CD4-positive, alpha-beta T cell (primary cell): ENCODE measurements at regions of chr7 and their contacts with region 1.

Region 1: DNA sequence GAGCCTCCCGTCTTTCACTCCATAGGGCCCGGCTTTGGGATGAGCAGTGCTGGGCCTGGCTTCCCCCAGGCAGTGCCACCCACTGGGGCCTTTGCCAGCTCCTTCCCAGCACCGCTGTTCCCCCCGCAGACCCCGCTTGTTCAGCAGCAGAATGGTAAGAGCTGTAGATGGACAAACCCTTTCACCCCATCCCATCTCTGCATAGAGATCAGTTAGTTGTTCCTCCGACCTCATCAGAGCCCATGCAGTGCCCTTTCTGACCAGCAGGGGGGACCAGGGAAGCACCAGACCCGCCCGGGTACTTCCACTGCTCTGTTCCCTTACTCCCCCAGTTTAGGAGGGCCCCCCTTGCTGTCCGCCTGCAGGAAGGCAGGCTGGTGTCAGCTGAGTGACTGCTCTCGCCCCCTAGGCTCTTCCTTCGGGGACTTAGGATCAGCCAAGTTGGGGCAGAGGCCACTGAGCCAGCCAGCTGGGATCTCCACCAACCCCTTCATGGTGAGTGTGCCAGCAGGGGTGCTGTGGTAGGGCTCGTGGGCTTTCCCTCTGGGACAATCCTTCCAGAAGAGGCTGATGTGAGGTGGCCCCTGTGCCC is 9.8 kb downstream of the SAP25 start:
- DNase-seq: peak; percentile 75 to 92 (median 84)
- ATAC-seq: peak; percentile 76
- H3K4me3 ChIP-seq: no peak overlapping the region
- H3K4me3 Mint-ChIP-seq: no peak overlapping the region
- H3K27ac ChIP-seq: no peak overlapping the region
- H3K27ac Mint-ChIP-seq: no peak overlapping the region
- H3K4me1 ChIP-seq: peaks cover 35% of the 10 kb centered on the region
- H3K4me1 Mint-ChIP-seq: peaks cover 34% of the 10 kb centered on the region
- H3K27me3 ChIP-seq: no peaks in the 10 kb centered on the region
- H3K27me3 Mint-ChIP-seq: no peaks in the 10 kb centered on the region
- CTCF ChIP-seq: peak; percentile 92

Region 2: DNA sequence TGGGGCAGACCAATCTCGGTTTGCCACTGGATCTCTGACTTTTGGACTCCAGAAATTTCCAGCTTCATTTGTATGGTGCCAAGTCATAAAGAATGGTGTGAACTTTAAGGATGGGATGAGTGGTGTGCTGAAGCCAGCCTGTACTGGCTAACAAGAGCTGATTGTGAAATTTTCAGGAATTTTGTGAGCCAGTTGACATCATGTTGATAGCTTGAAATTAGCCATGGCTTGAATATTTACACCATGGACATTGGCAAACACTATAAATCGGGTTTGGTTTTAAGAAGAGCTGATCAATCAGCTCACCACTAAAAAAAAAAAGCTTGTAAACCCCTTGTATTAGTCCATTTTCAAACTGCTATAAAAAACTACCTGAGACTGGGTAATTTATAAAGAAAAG is 1305.4 kb before region 1 on chr7:
- CTCF ChIA-PET with region 1: no interaction called
- POLR2A ChIA-PET with region 1: no interaction called
- intact Hi-C with region 1: no loop called
- DNase-seq: no peak
- ATAC-seq: no peak
- H3K4me3 ChIP-seq: no peak overlapping the region
- H3K4me3 Mint-ChIP-seq: no peak overlapping the region
- H3K27ac ChIP-seq: no peak overlapping the region
- H3K27ac Mint-ChIP-seq: no peak overlapping the region
- H3K4me1 ChIP-seq: no peaks in the 10 kb centered on the region
- H3K4me1 Mint-ChIP-seq: no peaks in the 10 kb centered on the region
- H3K27me3 ChIP-seq: no peaks in the 10 kb centered on the region
- H3K27me3 Mint-ChIP-seq: no peaks in the 10 kb centered on the region
- CTCF ChIP-seq: no peak

Region 3: DNA sequence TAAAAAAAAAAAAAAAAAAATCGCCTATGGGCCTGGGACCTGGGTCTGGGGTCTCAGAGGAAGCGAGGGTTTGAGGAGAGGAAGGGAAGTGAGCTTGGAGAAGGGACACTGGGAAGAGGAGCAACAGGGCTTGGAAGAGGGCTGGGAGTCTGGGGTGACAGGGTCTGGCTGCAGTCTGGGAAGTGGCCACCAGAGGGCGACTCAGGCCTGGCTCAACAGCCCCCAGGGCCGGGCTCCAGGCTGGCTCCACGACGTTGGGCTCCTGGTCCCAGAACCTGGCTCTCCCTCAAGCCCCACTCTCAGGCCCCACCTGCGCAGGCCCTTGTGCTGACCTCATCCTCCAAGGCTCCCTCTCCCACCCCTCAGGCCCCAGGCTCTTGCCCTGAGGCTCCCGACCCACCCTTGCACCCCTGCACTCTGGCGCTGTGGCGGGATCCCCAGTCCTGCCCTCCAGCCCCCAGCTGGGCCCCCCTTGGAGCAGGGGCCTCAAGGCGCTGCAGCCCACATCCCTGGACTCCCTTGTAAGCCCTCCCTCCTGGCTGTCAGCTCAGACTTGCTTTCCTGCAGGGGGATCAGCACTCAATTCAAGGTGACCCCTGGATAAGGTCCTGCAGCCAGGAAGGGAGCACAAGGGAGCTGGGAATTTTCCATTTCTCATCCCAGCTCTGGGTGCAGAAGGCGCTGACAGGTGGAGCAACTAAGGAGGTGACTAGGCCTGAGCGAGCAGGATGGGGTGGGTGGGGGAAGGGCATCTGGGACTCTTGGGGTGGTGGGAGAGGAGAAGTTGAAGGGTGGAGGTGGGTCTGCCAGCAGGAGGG is 94.5 kb before region 1 on chr7:
- CTCF ChIA-PET with region 1: interaction called, 22 read pairs
- POLR2A ChIA-PET with region 1: interaction called, 5 read pairs
- intact Hi-C with region 1: loop called (anchors 1 kb)
- DNase-seq: peak; percentile 70 to 92 (median 82)
- ATAC-seq: peak; percentile 97
- H3K4me3 ChIP-seq: no peak overlapping the region
- H3K4me3 Mint-ChIP-seq: no peak overlapping the region
- H3K27ac ChIP-seq: no peak overlapping the region
- H3K27ac Mint-ChIP-seq: no peak overlapping the region
- H3K4me1 ChIP-seq: peaks cover 38% of the 10 kb centered on the region
- H3K4me1 Mint-ChIP-seq: peaks cover 32% of the 10 kb centered on the region
- H3K27me3 ChIP-seq: no peaks in the 10 kb centered on the region
- H3K27me3 Mint-ChIP-seq: no peaks in the 10 kb centered on the region
- CTCF ChIP-seq: peak; percentile 90

Region 4: DNA sequence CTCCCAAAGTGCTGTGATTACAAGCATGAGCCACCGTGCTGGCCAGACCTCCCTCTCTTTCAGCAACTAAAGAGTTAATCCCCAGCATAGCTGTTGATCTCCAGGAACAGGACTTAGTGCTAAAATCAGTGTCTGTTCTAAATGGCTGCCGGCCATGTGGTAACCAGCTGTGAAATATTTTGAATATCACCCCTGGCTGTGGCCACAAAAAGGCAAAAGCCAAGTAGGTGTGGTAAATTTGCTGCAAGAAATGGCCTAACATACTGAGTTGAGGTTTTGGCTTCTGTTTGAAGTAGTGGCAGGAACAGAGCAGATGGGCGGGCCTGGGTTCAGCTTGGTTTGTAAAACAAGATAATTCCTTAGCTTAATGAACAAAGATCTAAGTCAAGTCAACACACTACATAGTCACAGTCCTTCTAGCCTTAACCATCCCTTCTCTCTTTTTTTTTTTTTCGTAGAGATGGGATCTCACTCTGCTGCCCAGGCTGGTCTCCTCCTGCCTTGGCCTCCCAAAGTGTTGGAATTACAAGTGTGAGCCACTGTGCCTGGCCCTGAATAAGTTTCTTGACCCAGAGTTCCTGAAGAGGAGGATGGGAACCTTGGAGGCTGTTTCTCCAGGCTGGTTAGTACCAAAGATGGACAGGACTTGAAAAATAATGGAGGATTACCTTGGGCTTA is 47.6 kb before region 1 on chr7:
- CTCF ChIA-PET with region 1: interaction called, 11 read pairs
- POLR2A ChIA-PET with region 1: interaction called, 6 read pairs
- intact Hi-C with region 1: no loop called
- DNase-seq: peak in 13 of 14 experiments; percentile 23 to 90 (median 48)
- ATAC-seq: peak; percentile 91
- H3K4me3 ChIP-seq: peak overlapping the region; percentile 1
- H3K4me3 Mint-ChIP-seq: peak overlapping the region; percentile 69
- H3K27ac ChIP-seq: peak overlapping the region in 1 of 2 donors; percentile 18
- H3K27ac Mint-ChIP-seq: peak overlapping the region; percentile 76
- H3K4me1 ChIP-seq: peaks cover 29% of the 10 kb centered on the region
- H3K4me1 Mint-ChIP-seq: peaks cover 38% of the 10 kb centered on the region
- H3K27me3 ChIP-seq: no peaks in the 10 kb centered on the region
- H3K27me3 Mint-ChIP-seq: no peaks in the 10 kb centered on the region
- CTCF ChIP-seq: no peak

Region 5: GRCh38 chr7:100545360-100546128 is 18.4 kb before region 1 on chr7:
- CTCF ChIA-PET with region 1: interaction called, 48 read pairs
- POLR2A ChIA-PET with region 1: interaction called, 8 read pairs
- intact Hi-C with region 1: loop called in 1 of 2 experiments (anchors 2 kb)
- DNase-seq: peak in 9 of 14 experiments; percentile 21 to 74 (median 44)
- ATAC-seq: peak; percentile 73
- H3K4me3 ChIP-seq: peak overlapping the region; percentile 29
- H3K4me3 Mint-ChIP-seq: peak overlapping the region; percentile 47
- H3K27ac ChIP-seq: peak overlapping the region; percentile 63 to 84
- H3K27ac Mint-ChIP-seq: peak overlapping the region; percentile 73
- H3K4me1 ChIP-seq: peaks cover 96% of the 10 kb centered on the region
- H3K4me1 Mint-ChIP-seq: peaks cover 97% of the 10 kb centered on the region
- H3K27me3 ChIP-seq: no peaks in the 10 kb centered on the region
- H3K27me3 Mint-ChIP-seq: no peaks in the 10 kb centered on the region
- CTCF ChIP-seq: no peak

Region 6: GRCh38 chr7:100691676-100692577 is 128.0 kb after region 1 on chr7:
- CTCF ChIA-PET with region 1: interaction called, 9 read pairs
- POLR2A ChIA-PET with region 1: no interaction called
- intact Hi-C with region 1: loop called (anchors 1 kb)
- DNase-seq: peak; percentile 71 to 91 (median 79)
- ATAC-seq: peak; percentile 77
- H3K4me3 ChIP-seq: peak overlapping the region; percentile 75
- H3K4me3 Mint-ChIP-seq: peak overlapping the region; percentile 97
- H3K27ac ChIP-seq: no peak overlapping the region
- H3K27ac Mint-ChIP-seq: peak overlapping the region; percentile 85
- H3K4me1 ChIP-seq: peaks cover 62% of the 10 kb centered on the region
- H3K4me1 Mint-ChIP-seq: peaks cover 34% of the 10 kb centered on the region
- H3K27me3 ChIP-seq: no peaks in the 10 kb centered on the region
- H3K27me3 Mint-ChIP-seq: no peaks in the 10 kb centered on the region
- CTCF ChIP-seq: peak; percentile 87

Region 7: GRCh38 chr7:100852048-100852872 is 288.4 kb after region 1 on chr7 and contains the start of gene SLC12A9:
- CTCF ChIA-PET with region 1: interaction called, 3 read pairs
- POLR2A ChIA-PET with region 1: interaction called, 5 read pairs
- intact Hi-C with region 1: loop called (anchors 2 kb)
- DNase-seq: peak; percentile 68 to 92 (median 82)
- ATAC-seq: peak; percentile 91
- H3K4me3 ChIP-seq: peak within 1 kb of the TSS; percentile 72
- H3K4me3 Mint-ChIP-seq: peak within 1 kb of the TSS; percentile 95
- H3K27ac ChIP-seq: peak within 1 kb of the TSS; percentile 36 to 62
- H3K27ac Mint-ChIP-seq: peak within 1 kb of the TSS; percentile 91
- H3K4me1 ChIP-seq: peaks cover 30% of the 10 kb centered on the region
- H3K4me1 Mint-ChIP-seq: peaks cover 23% of the 10 kb centered on the region
- H3K27me3 ChIP-seq: no peaks in the 10 kb centered on the region
- H3K27me3 Mint-ChIP-seq: no peaks in the 10 kb centered on the region
- CTCF ChIP-seq: peak; percentile 96
- total RNA-seq, gene SLC12A9: 26.3 to 28.2 TPM